Heart right ventricle (tissue), 16 donors: ENCODE measurements at regions of chr7 and their contacts with region 1.

Region 1: DNA sequence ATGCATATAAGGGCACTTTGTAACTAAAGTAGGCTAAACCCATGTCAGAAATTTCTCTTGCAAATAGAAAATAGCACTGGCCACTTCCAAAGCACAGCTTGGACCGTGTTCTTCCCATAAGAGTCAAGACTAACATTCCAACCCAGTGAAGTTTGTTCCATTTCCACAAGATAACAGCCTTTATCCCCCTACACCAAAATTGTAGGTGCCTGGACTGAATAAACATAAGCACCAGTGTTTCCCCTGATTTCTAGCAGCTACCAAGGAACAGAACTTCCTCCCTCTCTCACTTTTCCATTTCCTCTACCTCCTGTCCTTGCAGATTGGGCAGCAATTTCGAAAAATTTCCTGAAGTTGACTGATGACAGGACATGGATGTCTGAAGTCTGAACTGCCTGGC is 219.7 kb downstream of the CREB5 start:
- DNase-seq: no peak
- ATAC-seq: peak in 2 of 8 donors; percentile 27 to 51
- H3K4me3 ChIP-seq: no peak overlapping the region
- H3K27ac ChIP-seq: no peak overlapping the region
- H3K4me1 ChIP-seq: peaks cover 0 to 45% (median 12%) of the 10 kb centered on the region in 9 donors
- H3K27me3 ChIP-seq: no peaks in the 10 kb centered on the region
- CTCF ChIP-seq: no peak

Region 2: GRCh38 chr7:28695300-28696295 is 63.6 kb after region 1 on chr7:
- intact Hi-C with region 1: loop called in 1 of 10 experiments (anchors 1 kb)
- DNase-seq: peak in 1 of 2 donors; percentile 62
- ATAC-seq: peak; percentile 75 to 94 (median 88)
- H3K4me3 ChIP-seq: no peak overlapping the region
- H3K27ac ChIP-seq: peak overlapping the region in 9 of 10 donors; percentile 43 to 73 (median 64)
- H3K4me1 ChIP-seq: peaks cover 11 to 63% (median 45%) of the 10 kb centered on the region in 9 donors
- H3K27me3 ChIP-seq: no peaks in the 10 kb centered on the region
- CTCF ChIP-seq: no peak